Mammary epithelial cell (primary cell): ENCODE measurements at regions of chr5 and their contacts with region 1.

Region 1: DNA sequence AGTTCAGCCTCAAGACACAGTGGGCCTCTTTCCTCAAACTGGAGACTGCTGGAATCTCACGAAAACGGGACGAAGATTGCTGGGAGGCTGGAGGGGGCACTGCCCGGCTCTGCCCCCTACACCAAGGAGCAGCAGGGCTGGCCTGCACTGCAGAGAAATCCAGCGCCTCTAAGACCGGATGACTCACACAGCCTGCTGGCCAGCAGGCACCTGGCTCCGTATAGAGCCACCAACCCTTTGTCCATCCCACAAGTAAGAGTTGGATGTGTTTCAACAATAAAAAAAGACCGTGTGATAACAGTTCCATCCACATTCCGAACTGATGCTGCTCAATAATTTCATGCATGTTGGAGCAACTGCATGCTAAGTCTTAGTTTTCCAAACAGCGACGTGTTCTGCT is 11.5 kb downstream of the CCDC127 start:
- DNase-seq: no peak
- H3K4me3 ChIP-seq: no peak overlapping the region
- H3K27ac ChIP-seq: no peak overlapping the region
- H3K4me1 ChIP-seq: no peaks in the 10 kb centered on the region
- H3K27me3 ChIP-seq: no peaks in the 10 kb centered on the region
- CTCF ChIP-seq: no peak

Region 2: GRCh38 chr5:159441-160172 is 46.8 kb before region 1 on chr5:
- CTCF ChIA-PET with region 1: no interaction called
- dilution Hi-C with region 1: loop called (anchors 5 kb)
- in situ Hi-C with region 1: no loop called
- intact Hi-C with region 1: no loop called
- DNase-seq: no peak
- H3K4me3 ChIP-seq: no peak overlapping the region
- H3K27ac ChIP-seq: no peak overlapping the region
- H3K4me1 ChIP-seq: no peaks in the 10 kb centered on the region
- H3K27me3 ChIP-seq: peaks cover 2% of the 10 kb centered on the region
- CTCF ChIP-seq: no peak

Region 3: DNA sequence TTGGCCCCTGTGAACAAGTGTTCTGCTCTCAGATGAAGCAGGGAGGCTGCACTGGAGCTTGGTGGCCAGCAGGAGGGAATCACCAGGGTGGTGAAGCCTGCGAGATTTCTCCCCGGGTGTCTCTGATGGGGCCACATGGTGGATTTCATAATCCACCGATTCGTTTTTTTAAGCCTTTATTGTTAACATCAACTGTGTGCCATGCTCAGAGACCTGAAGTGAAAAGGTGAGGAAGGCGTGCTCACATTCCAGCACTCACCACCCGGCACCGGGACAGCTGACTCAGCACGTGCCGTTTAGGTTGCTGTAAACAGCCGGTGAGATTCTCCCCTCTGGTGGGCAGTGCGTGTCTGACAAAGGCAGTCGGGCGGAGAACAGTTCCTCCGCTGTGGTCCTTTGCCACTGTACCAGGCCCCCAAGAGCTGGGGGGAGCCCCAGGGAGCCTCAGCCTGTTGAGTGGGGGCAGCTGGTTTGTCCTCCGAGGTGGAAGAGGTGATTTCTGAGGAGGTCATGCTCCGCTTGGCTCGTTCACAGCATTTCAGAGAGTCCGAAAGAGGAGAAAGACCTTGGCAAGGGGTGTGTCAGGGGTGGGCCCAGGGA is 102.4 kb after region 1 on chr5:
- CTCF ChIA-PET with region 1: no interaction called
- dilution Hi-C with region 1: no loop called
- in situ Hi-C with region 1: no loop called
- intact Hi-C with region 1: no loop called
- DNase-seq: no peak
- H3K4me3 ChIP-seq: no peak overlapping the region
- H3K27ac ChIP-seq: no peak overlapping the region
- H3K4me1 ChIP-seq: no peaks in the 10 kb centered on the region
- H3K27me3 ChIP-seq: no peaks in the 10 kb centered on the region
- CTCF ChIP-seq: peak; percentile 3 to 19

Region 4: GRCh38 chr5:337563-338130 is 131.2 kb after region 1 on chr5:
- CTCF ChIA-PET with region 1: no interaction called
- dilution Hi-C with region 1: loop called (anchors 5 kb)
- in situ Hi-C with region 1: no loop called
- intact Hi-C with region 1: no loop called
- DNase-seq: peak; percentile 19
- H3K4me3 ChIP-seq: no peak overlapping the region
- H3K27ac ChIP-seq: no peak overlapping the region
- H3K4me1 ChIP-seq: no peaks in the 10 kb centered on the region
- H3K27me3 ChIP-seq: no peaks in the 10 kb centered on the region
- CTCF ChIP-seq: peak; percentile 48 to 68

Region 5: GRCh38 chr5:472656-473553 is 266.5 kb after region 1 on chr5:
- CTCF ChIA-PET with region 1: no interaction called
- dilution Hi-C with region 1: no loop called
- in situ Hi-C with region 1: no loop called
- intact Hi-C with region 1: no loop called
- DNase-seq: peak; percentile 66
- H3K4me3 ChIP-seq: peak overlapping the region; percentile 69 to 94 (median 73)
- H3K27ac ChIP-seq: peak overlapping the region; percentile 32
- H3K4me1 ChIP-seq: peaks cover 31% of the 10 kb centered on the region
- H3K27me3 ChIP-seq: no peaks in the 10 kb centered on the region
- CTCF ChIP-seq: no peak